ENCODE measurements at regions of chr6 and their contacts with region 1.

Region 1: DNA sequence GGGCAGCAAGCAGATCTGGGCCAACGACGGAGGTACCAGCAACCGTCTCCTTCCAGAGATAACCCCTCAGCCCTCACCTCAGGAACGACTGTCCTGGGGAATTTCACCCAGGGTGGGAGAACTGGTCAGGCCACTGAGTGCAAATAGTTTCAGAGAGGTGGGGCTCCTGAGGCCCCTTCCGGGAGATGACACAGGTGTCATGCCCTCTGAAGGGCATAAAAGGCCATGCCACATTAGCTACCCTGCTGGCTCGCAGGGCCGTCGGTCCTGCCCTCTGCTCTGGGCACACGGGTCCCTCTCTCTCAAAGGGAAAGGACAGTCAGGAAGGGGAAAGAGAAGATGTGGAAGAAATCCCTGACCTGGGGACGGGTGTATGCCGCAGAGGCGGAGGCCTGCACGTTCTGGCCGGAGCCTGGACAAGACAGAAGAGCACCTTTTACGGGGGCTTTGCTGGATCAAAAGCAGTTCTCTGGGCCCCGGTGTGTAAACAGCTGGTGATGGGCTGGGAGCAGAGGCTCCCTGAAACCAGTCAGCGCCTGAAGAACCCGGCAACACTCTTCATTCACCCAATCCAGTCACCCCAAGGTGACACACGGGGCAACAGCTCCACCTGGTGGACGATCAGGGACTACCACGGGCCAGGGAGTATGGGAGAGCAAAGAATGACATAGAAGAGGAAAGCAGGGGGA is 6.4 kb upstream of the TAF8 start:
- DNase-seq: peak; percentile 86 to 90 (median 89)
- H3K4me3 ChIP-seq: peak overlapping the region in 1 of 2 donors; percentile 49
- H3K4me3 Mint-ChIP-seq: peak overlapping the region; percentile 81 to 97 (median 86)
- H3K27ac ChIP-seq: peak overlapping the region; percentile 57
- H3K27ac Mint-ChIP-seq: peak overlapping the region; percentile 57 to 98 (median 90)
- H3K4me1 ChIP-seq: peaks cover 76% of the 10 kb centered on the region
- H3K4me1 Mint-ChIP-seq: peaks cover 42 to 92% (median 62%) of the 10 kb centered on the region in 4 donors
- H3K27me3 ChIP-seq: no peaks in the 10 kb centered on the region
- H3K27me3 Mint-ChIP-seq: no peaks in the 10 kb centered on the region

Region 2: GRCh38 chr6:41779793-41780545 is 264.0 kb before region 1 on chr6 and contains the start of gene FRS3:
- CTCF ChIA-PET with region 1: interaction called, 178 read pairs
- POLR2A ChIA-PET with region 1: interaction called, 126 read pairs
- intact Hi-C with region 1: loop called (anchors 1 kb)
- DNase-seq: peak; percentile 96 to 99 (median 97)
- H3K4me3 ChIP-seq: peak within 1 kb of the TSS; percentile 45 to 76
- H3K4me3 Mint-ChIP-seq: peak within 1 kb of the TSS; percentile 87 to 94 (median 88)
- H3K27ac ChIP-seq: peak within 1 kb of the TSS; percentile 44
- H3K27ac Mint-ChIP-seq: peak within 1 kb of the TSS in 6 of 7 donors; percentile 83 to 93 (median 88)
- H3K4me1 ChIP-seq: peaks cover 15% of the 10 kb centered on the region
- H3K4me1 Mint-ChIP-seq: peaks cover 9 to 32% (median 13%) of the 10 kb centered on the region in 4 donors
- H3K27me3 ChIP-seq: no peaks in the 10 kb centered on the region
- H3K27me3 Mint-ChIP-seq: peaks cover 2 to 3% of the 10 kb centered on the region in 2 donors
- total RNA-seq, gene FRS3: 8.9 to 10.0 TPM

Region 3: GRCh38 chr6:41846666-41847237 is 197.2 kb before region 1 on chr6:
- CTCF ChIA-PET with region 1: interaction called, 95 read pairs
- POLR2A ChIA-PET with region 1: interaction called, 3 read pairs
- intact Hi-C with region 1: loop called (anchors 1 kb)
- DNase-seq: peak; percentile 41 to 57 (median 51)
- H3K4me3 ChIP-seq: no peak overlapping the region
- H3K4me3 Mint-ChIP-seq: no peak overlapping the region
- H3K27ac ChIP-seq: no peak overlapping the region
- H3K27ac Mint-ChIP-seq: peak overlapping the region in 1 of 7 donors; percentile 53
- H3K4me1 ChIP-seq: no peaks in the 10 kb centered on the region
- H3K4me1 Mint-ChIP-seq: peaks cover 5 to 8% (median 6%) of the 10 kb centered on the region in 4 donors
- H3K27me3 ChIP-seq: no peaks in the 10 kb centered on the region
- H3K27me3 Mint-ChIP-seq: no peaks in the 10 kb centered on the region

Region 4: DNA sequence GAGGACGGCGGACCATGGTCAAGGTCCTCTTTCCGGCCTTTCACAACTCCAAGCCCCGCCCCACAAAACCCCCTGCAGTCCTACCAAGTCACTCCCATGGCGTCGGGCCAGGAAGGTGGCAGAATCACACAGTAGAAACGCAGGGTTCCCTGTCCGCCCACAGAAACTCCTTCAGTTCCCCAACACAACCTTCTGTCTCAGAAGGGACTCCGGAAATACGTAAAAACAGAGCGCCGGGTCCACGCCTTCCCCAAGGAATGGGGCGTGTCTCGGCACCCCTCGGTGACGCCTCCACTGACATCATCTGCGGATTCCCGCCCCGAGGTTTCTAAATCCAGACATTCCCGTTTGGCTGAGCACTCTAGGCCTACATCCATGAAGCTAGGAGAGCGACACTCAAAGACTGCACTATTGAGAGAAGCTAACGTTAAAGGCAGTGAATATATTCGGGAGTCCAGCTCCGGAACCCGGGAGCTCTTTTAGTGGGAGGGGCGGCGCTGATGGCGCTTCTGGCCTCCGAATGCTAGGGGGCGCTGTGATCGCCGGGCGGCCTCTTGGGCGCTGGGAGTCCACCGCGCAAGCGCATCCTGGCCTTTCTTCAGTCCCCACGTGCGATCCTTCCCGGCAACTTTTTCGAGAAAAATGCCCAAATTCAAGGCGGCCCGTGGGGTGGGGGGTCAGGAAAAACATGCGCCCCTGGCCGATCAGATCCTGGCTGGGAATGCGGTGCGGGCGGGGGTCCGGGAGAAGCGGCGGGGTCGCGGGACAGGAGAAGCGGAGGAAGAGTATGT is 122.8 kb before region 1 on chr6 and contains the starts of genes BYSL and MED20:
- CTCF ChIA-PET with region 1: interaction called, 125 read pairs
- POLR2A ChIA-PET with region 1: interaction called, 95 read pairs
- intact Hi-C with region 1: loop called (anchors 1 kb)
- DNase-seq: peak; percentile 94 to 96 (median 95)
- H3K4me3 ChIP-seq: peak within 1 kb of the TSS; percentile 75 to 99
- H3K4me3 Mint-ChIP-seq: peak within 1 kb of the TSS; percentile 99 to 100 (median 100)
- H3K27ac ChIP-seq: peak within 1 kb of the TSS; percentile 91
- H3K27ac Mint-ChIP-seq: peak within 1 kb of the TSS; percentile 98 to 100 (median 100)
- H3K4me1 ChIP-seq: peaks cover 47% of the 10 kb centered on the region
- H3K4me1 Mint-ChIP-seq: peaks cover 34 to 57% (median 47%) of the 10 kb centered on the region in 4 donors
- H3K27me3 ChIP-seq: no peaks in the 10 kb centered on the region
- H3K27me3 Mint-ChIP-seq: peaks cover 0 to 2% of the 10 kb centered on the region in 2 donors
- total RNA-seq, gene BYSL: 7.1 to 9.2 TPM
- total RNA-seq, gene MED20: 10.0 to 11.5 TPM

Region 5: GRCh38 chr6:41984623-41985022 is 59.3 kb before region 1 on chr6:
- CTCF ChIA-PET with region 1: interaction called, 4 read pairs
- POLR2A ChIA-PET with region 1: no interaction called
- intact Hi-C with region 1: loop called (anchors 5 kb)
- DNase-seq: no peak
- H3K4me3 ChIP-seq: no peak overlapping the region
- H3K4me3 Mint-ChIP-seq: peak overlapping the region in 1 of 8 donors; percentile 34
- H3K27ac ChIP-seq: no peak overlapping the region
- H3K27ac Mint-ChIP-seq: peak overlapping the region in 1 of 7 donors; percentile 19
- H3K4me1 ChIP-seq: peaks cover 52% of the 10 kb centered on the region
- H3K4me1 Mint-ChIP-seq: peaks cover 42 to 85% (median 69%) of the 10 kb centered on the region in 4 donors
- H3K27me3 ChIP-seq: no peaks in the 10 kb centered on the region
- H3K27me3 Mint-ChIP-seq: no peaks in the 10 kb centered on the region

Region 6: DNA sequence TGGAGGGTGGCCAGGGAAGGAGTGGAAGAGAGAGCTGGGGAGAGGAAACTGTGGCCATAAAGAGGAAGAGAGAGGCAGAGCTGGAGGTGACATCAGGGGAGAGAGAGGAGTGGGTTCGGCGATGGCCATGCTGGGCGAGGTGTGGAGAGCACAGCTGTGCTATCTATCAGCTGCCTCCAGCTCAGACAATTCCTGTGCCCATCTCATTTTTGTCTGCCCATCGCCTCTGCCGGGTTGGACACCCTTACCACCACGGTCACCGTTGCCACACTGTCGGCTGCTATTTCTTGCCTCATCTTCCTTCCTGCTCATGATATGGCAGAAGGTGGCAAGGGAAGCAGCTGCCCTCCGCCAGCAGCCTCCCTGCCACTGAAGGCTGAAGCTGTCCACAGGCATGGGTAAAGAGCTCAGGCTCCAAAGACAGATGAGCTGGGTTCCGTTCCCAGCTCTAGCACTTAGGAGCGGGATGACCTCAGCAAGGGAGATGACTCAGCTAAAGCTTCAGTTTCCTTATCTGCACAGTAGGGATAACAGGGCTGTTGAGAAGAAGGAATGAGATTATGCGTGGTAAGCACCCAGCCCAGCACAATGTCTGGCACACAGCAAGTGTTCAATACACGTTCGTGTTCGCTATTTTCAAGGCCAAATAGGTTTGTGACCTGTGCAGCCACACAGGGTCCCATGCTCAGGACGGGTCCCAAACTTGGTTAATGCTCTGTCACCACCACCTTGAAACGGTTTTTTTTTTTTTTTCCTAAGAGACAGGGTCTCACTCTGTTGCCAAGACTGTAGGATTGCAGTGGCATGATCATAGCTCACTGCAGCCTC is 15.5 kb before region 1 on chr6:
- CTCF ChIA-PET with region 1: interaction called, 36 read pairs
- POLR2A ChIA-PET with region 1: interaction called, 27 read pairs
- intact Hi-C with region 1: loop called (anchors 1 kb)
- DNase-seq: no peak
- H3K4me3 ChIP-seq: no peak overlapping the region
- H3K4me3 Mint-ChIP-seq: peak overlapping the region in 7 of 8 donors; percentile 64 to 81 (median 76)
- H3K27ac ChIP-seq: peak overlapping the region; percentile 62
- H3K27ac Mint-ChIP-seq: peak overlapping the region; percentile 92 to 95 (median 93)
- H3K4me1 ChIP-seq: peaks cover 98% of the 10 kb centered on the region
- H3K4me1 Mint-ChIP-seq: peaks cover 66 to 97% (median 80%) of the 10 kb centered on the region in 4 donors
- H3K27me3 ChIP-seq: no peaks in the 10 kb centered on the region
- H3K27me3 Mint-ChIP-seq: no peaks in the 10 kb centered on the region

Region 7: DNA sequence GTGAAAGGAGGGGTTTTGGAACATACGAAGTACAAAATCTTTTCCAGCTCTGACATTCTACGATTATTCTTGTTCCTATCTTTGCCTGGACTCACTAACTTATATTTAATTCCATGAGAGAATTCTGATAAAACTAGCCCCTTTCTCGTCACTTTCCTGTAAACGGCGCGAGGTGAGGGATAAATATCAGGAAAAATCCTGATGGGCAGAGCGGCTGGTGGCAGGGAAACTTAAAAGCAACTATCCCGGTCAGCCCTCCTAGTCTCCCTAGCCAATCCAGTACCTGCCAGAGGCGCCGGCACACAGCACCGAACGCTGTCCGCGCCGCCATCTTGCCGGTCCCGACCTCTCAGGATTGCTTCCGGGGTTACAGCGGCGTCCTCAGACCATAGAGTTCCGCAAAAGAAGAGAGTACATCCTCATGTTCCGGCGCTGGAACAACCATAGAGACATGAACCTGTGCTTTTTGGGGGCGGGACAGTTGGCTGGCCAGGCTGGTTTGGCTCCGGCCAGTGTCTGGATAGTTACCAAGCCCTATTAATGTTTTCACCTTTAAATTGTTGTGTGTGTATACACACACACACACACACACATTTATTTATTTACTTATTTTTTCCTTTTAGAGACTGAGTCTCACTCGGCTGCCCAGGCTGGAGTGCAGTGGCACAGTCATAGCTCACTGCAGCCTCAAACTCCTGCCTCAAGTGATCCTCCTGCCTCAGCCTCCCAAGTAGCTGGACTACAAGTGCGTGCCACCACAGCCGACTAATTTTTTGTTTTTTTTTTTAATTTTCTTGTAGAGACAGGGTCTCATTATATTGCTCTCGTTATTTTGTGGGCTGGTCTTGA is 173.8 kb after region 1 on chr6 and contains the start of gene MRPS10:
- CTCF ChIA-PET with region 1: interaction called, 6 read pairs
- POLR2A ChIA-PET with region 1: interaction called, 3 read pairs
- intact Hi-C with region 1: loop called (anchors 10 kb)
- DNase-seq: peak; percentile 88 to 93 (median 90)
- H3K4me3 ChIP-seq: peak within 1 kb of the TSS; percentile 71 to 72
- H3K4me3 Mint-ChIP-seq: peak within 1 kb of the TSS; percentile 95 to 99 (median 98)
- H3K27ac ChIP-seq: peak within 1 kb of the TSS; percentile 81
- H3K27ac Mint-ChIP-seq: peak within 1 kb of the TSS; percentile 90 to 98 (median 97)
- H3K4me1 ChIP-seq: peaks cover 29% of the 10 kb centered on the region
- H3K4me1 Mint-ChIP-seq: peaks cover 12 to 28% (median 20%) of the 10 kb centered on the region in 4 donors
- H3K27me3 ChIP-seq: no peaks in the 10 kb centered on the region
- H3K27me3 Mint-ChIP-seq: no peaks in the 10 kb centered on the region
- total RNA-seq, gene MRPS10: 22.6 to 25.1 TPM